ENCODE measurements at regions of chr9 and their contacts with region 1.

Region 1: DNA sequence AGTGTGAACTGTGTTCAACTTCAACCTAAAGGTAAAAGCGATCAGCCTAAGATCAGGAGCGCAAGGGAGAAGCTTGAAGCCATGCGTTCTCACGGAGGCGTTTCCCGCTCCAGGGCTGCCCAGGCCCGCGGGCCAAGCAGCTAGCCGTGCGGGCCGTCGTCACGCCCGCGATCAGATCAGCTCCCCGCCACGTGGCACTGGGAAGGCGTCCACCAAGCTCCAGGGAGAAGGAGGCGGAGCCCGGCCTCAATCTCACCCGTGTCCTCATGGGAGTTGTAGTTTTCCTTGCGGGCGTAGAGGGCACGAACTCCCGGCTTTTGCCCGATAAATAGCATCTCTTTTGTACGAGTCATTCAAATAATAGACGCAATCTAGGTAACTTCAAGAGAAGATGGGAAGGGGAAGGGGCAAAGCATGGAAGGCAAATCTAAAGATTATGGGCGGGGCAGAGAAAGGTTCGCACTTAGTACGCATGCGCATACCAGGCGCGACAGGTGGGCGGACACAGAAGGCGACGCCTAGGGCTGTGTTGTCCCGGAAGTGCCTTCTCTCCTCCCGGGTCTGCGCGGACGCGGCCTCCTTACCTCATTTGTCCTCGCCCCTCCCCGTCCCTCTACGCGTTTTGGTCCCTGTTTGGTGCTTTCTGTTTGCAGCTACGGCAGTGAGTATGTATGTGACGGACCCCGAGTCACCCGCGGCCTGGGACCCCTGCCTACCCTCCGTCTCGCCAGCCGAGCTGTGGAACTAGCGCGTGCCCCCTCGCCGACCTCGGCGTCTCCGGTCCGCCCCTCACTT is 40.8 kb upstream of the ZCCHC7 start:
- DNase-seq: peak; percentile 93
- H3K4me3 Mint-ChIP-seq: peak overlapping the region; percentile 94
- H3K27ac Mint-ChIP-seq: peak overlapping the region; percentile 80
- H3K4me1 Mint-ChIP-seq: peaks cover 45% of the 10 kb centered on the region
- H3K27me3 Mint-ChIP-seq: peaks cover 8% of the 10 kb centered on the region

Region 2: DNA sequence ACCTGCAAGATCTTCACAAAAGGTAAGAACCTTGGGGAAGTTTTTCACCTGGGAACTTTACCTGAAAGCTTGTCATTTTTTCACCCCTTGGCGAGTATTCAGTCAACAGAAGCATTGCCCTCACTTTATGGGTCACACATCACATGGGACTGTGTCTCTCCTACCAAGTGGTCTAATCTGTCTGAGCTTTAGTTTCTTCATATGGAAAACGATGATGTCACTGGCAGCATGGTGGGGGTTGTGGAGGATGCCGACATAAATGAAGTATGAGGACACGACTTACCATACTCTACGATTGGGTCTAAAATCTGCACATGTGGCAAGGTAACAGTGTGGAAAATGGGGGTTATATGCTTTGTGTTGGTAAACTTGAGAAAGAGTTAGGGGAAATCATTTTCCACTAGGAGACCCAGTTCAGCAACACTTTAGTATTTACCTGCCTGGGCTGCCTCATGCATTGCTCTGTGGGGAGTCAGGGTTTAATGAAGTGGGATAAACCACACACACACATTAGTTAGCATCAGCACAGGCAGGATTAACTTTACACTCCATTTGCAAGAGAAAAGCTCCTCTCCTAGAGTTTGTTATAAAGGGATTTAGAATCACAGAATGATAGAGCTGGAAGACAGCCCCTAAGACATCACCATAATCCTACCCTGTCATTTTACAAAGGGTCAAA is 25.7 kb before region 1 on chr9:
- CTCF ChIA-PET with region 1: no interaction called
- POLR2A ChIA-PET with region 1: no interaction called
- DNase-seq: no peak
- H3K4me3 Mint-ChIP-seq: no peak overlapping the region
- H3K27ac Mint-ChIP-seq: no peak overlapping the region
- H3K4me1 Mint-ChIP-seq: no peaks in the 10 kb centered on the region
- H3K27me3 Mint-ChIP-seq: peaks cover 56% of the 10 kb centered on the region

Region 3: DNA sequence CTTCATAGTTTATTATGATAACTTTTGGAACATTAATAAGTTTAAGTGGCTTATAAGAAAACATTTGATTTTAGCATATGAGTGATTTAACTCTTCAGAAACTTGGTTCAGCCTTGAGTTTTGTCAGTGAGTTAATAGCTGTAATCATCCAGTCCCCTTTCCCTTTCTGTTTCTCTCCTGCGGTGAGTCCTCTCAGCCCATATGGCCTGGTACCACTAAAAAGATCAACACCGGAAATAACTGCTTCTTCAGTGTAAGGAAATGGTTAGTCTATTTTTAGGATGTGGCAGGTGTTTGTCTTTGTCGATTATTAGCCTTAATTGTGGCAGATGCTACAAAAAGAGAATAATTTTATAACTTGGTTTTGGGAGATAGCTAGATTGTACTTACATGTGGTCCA is 222.7 kb after region 1 on chr9:
- CTCF ChIA-PET with region 1: interaction called, 4 read pairs
- POLR2A ChIA-PET with region 1: interaction called, 17 read pairs
- DNase-seq: peak; percentile 68
- H3K4me3 Mint-ChIP-seq: peak overlapping the region; percentile 40
- H3K27ac Mint-ChIP-seq: peak overlapping the region; percentile 85
- H3K4me1 Mint-ChIP-seq: peaks cover 50% of the 10 kb centered on the region
- H3K27me3 Mint-ChIP-seq: no peaks in the 10 kb centered on the region